MCF 10A (cell line): ENCODE measurements at regions of chr17 and their contacts with region 1.

Region 1: GRCh38 chr17:18248300-18248731 is 10.2 kb downstream of the FLII start:
- DNase-seq: peak; percentile 83
- H3K4me3 Mint-ChIP-seq: no peak overlapping the region
- H3K27ac Mint-ChIP-seq: no peak overlapping the region
- H3K4me1 Mint-ChIP-seq: peaks cover 5% of the 10 kb centered on the region
- H3K27me3 Mint-ChIP-seq: no peaks in the 10 kb centered on the region
- CTCF ChIP-seq: peak; percentile 61

Region 2: DNA sequence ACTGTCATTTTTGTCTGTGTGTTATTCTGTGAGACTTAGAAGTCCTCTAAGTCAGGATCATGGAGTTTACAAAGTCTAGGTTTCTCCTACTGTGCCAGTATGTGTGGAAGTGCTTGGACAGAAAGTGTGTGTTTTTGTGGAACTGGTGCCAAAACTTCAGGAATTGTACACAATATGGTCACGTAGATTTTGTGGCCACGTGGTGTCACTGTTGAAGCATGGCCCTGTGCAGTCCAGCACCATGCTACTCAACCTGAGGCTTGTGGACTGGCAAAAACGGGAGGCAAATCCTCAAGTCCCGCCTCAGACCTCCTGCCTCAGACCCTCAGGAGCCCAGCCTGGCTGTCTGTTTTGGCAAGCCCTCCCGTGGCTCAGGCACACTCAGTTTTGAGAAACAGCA is 81.4 kb before region 1 on chr17:
- CTCF ChIA-PET with region 1: no interaction called
- POLR2A ChIA-PET with region 1: no interaction called
- intact Hi-C with region 1: no loop called
- DNase-seq: no peak
- H3K4me3 Mint-ChIP-seq: no peak overlapping the region
- H3K27ac Mint-ChIP-seq: no peak overlapping the region
- H3K4me1 Mint-ChIP-seq: no peaks in the 10 kb centered on the region
- H3K27me3 Mint-ChIP-seq: no peaks in the 10 kb centered on the region
- CTCF ChIP-seq: no peak

Region 3: GRCh38 chr17:18217412-18218015 is 30.8 kb before region 1 on chr17:
- CTCF ChIA-PET with region 1: no interaction called
- POLR2A ChIA-PET with region 1: no interaction called
- intact Hi-C with region 1: loop called (anchors 2 kb)
- DNase-seq: peak; percentile 72
- H3K4me3 Mint-ChIP-seq: no peak overlapping the region
- H3K27ac Mint-ChIP-seq: no peak overlapping the region
- H3K4me1 Mint-ChIP-seq: peaks cover 4% of the 10 kb centered on the region
- H3K27me3 Mint-ChIP-seq: no peaks in the 10 kb centered on the region
- CTCF ChIP-seq: peak; percentile 88

Region 4: DNA sequence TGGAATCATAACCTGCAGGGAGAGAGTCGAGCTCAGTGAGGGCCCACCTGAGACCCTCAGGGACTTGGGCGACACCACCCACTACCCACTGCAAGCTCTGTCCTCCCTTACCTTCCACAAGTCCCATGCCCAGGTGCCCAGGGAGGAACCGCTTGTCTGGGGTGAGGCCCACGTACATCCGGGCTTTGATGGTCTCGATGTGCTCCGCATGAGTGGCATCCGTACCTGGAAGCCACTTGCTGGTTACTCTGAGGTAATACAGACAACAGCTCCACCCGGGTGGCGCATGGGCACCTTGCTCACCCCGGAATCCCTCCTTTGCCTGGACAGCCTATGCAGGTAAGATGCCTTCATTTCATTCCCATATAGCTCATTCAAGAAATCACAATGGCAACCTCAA is 37.0 kb after region 1 on chr17:
- CTCF ChIA-PET with region 1: no interaction called
- POLR2A ChIA-PET with region 1: no interaction called
- intact Hi-C with region 1: no loop called
- DNase-seq: no peak
- H3K4me3 Mint-ChIP-seq: no peak overlapping the region
- H3K27ac Mint-ChIP-seq: no peak overlapping the region
- H3K4me1 Mint-ChIP-seq: no peaks in the 10 kb centered on the region
- H3K27me3 Mint-ChIP-seq: no peaks in the 10 kb centered on the region
- CTCF ChIP-seq: no peak

Region 5: DNA sequence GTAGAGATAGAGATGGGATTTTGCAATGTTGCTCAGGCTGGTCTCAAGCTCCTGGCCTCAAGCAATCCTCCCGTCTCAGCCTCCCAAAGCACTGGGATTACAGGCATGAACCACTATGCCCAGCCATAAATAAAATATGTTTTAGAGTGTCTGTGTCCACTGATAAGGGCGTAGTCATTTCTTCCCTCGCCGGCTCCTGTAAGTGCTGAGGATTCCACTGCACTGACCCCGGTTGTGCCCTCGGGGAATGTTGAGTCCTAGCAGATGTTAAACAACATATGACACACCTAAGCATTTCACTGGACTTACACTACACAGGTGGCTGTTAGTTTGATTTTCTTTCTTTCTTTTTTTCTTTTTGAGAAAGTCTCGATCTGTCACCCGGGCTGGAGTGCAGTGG is 120.6 kb after region 1 on chr17:
- CTCF ChIA-PET with region 1: no interaction called
- POLR2A ChIA-PET with region 1: no interaction called
- intact Hi-C with region 1: no loop called
- DNase-seq: peak; percentile 47
- H3K4me3 Mint-ChIP-seq: no peak overlapping the region
- H3K27ac Mint-ChIP-seq: no peak overlapping the region
- H3K4me1 Mint-ChIP-seq: peaks cover 13% of the 10 kb centered on the region
- H3K27me3 Mint-ChIP-seq: no peaks in the 10 kb centered on the region
- CTCF ChIP-seq: no peak